Panc1 (cell line): ENCODE measurements at regions of chr10 and their contacts with region 1.

Region 1: DNA sequence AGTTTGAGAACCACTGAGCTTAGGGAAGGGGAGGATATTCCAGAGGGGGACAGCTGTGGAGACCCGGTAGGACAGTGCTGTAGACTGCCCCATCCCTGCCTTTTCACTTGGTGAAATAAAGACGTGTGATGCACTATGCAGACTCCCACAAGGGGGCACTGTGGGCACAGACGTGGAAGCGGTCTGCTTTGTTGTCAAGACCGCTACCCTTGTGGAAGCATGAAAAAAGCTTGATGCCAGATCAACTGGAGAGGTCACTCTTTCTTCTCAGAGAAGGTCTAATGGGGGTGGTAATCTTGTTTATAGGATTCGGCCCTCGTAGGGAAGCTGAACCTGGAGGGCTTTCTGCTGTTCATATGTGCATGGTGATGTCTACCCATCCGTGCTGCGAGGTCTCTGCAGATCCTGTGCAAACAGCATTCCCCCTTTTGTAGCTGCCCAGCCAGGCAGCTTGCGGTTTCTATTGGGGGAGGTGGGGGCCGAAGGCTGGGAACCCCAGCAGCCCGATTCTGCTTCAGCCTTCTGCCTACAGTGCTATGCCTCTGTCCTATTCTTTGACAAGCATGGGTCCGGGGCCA is 13.7 kb downstream of the RPS24 start:
- DNase-seq: peak; percentile 79
- ATAC-seq: peak; percentile 75
- H3K4me3 ChIP-seq: no peak overlapping the region
- H3K27ac ChIP-seq: no peak overlapping the region
- H3K4me1 ChIP-seq: peaks cover 16% of the 10 kb centered on the region
- H3K27me3 ChIP-seq: no peaks in the 10 kb centered on the region
- CTCF ChIP-seq: peak; percentile 97

Region 2: DNA sequence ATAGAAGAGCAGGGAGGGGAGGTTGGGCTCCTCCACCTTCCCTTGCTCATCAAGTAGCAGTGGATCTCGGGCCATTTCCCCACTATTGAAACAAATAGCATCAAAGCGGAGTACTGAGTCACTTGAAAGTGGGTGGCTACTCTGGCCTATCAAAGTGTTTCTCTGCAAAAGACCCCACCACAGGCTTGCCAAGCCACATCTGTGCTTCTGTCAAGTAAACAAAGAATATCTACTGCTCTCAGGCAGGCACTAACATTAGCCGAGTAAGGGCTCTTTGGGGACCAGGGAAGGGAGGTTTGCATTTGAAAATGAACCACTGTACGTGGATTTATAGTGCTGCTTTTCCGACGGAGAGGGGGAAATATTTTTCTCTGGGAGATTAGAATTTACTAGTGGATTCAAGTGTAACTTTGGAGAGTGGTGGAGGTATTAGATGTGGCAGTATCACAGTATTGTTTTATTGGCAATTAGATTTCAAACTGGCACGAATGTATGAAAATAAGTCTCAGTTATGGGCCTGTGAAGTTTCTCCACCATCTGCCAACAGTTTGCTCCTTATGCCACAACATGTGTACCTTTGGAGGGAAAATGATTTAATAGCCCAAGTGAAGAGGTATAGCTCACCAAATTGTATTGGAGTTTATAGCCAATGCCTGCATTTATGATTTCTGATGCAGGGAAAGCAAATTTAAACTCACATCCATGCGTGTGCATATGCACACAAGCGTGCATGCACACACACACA is 83.7 kb after region 1 on chr10:
- CTCF ChIA-PET with region 1: interaction called, 4 read pairs
- POLR2A ChIA-PET with region 1: interaction called, 11 read pairs
- in situ Hi-C with region 1: no loop called
- intact Hi-C with region 1: no loop called
- DNase-seq: no peak
- ATAC-seq: no peak
- H3K4me3 ChIP-seq: no peak overlapping the region
- H3K27ac ChIP-seq: no peak overlapping the region
- H3K4me1 ChIP-seq: no peaks in the 10 kb centered on the region
- H3K27me3 ChIP-seq: peaks cover 15% of the 10 kb centered on the region
- CTCF ChIP-seq: no peak

Region 3: DNA sequence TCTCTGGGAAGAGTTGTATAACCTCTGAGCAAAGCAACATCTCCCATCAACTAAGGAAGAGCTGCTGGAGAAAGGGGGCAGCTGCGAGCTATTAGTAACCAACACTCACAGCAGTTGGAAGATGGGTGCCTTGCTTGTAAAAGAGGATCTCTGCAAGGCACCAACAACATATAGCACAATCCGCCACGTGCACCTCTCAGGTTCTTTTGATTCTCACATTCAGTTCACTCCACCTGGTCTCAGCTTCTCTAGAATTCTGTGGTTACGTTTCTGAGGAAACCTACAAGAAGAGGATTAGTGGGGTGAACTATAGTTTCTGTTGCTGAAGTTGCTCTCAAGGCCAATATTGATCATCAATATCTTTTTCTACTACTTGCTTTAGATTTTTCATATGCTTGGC is 103.4 kb after region 1 on chr10:
- CTCF ChIA-PET with region 1: no interaction called
- POLR2A ChIA-PET with region 1: no interaction called
- in situ Hi-C with region 1: no loop called
- intact Hi-C with region 1: no loop called
- DNase-seq: no peak
- ATAC-seq: no peak
- H3K4me3 ChIP-seq: no peak overlapping the region
- H3K27ac ChIP-seq: no peak overlapping the region
- H3K4me1 ChIP-seq: no peaks in the 10 kb centered on the region
- H3K27me3 ChIP-seq: peaks cover 12% of the 10 kb centered on the region; the same call in 1 of the 2 replicates
- CTCF ChIP-seq: no peak

Region 4: DNA sequence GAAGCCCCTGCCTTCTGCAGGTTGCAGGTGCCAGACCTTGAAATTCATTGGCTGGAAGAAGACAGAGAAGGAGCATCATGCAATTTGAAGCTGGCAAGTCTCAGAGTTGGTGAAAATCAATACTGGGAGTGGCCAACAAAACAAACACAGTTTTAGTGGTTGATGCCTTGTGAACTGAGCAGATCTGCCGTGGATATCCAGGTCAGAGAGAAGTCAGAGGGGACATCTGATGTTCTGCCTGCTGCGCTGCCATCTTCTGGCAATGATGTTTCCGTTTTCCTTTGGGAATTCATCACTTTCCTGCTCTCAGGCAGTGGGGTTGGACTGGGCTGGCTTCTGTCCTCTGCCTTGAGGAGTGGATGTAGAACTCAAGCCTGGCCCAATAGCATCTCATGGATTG is 118.2 kb after region 1 on chr10:
- CTCF ChIA-PET with region 1: interaction called, 3 read pairs
- POLR2A ChIA-PET with region 1: no interaction called
- in situ Hi-C with region 1: no loop called
- intact Hi-C with region 1: loop called (anchors 2 kb)
- DNase-seq: no peak
- ATAC-seq: no peak
- H3K4me3 ChIP-seq: no peak overlapping the region
- H3K27ac ChIP-seq: no peak overlapping the region
- H3K4me1 ChIP-seq: no peaks in the 10 kb centered on the region
- H3K27me3 ChIP-seq: peaks cover 29% of the 10 kb centered on the region
- CTCF ChIP-seq: peak; percentile 57

Region 5: GRCh38 chr10:78304091-78305045 is 257.0 kb after region 1 on chr10:
- CTCF ChIA-PET with region 1: interaction called, 3 read pairs
- POLR2A ChIA-PET with region 1: no interaction called
- in situ Hi-C with region 1: no loop called
- intact Hi-C with region 1: loop called (anchors 5 kb)
- DNase-seq: no peak
- ATAC-seq: no peak
- H3K4me3 ChIP-seq: no peak overlapping the region
- H3K27ac ChIP-seq: peak overlapping the region; percentile 13; the same call in 1 of the 2 replicates
- H3K4me1 ChIP-seq: peaks cover 13% of the 10 kb centered on the region
- H3K27me3 ChIP-seq: peaks cover 24% of the 10 kb centered on the region; the same call in 1 of the 2 replicates
- CTCF ChIP-seq: no peak

Region 6: DNA sequence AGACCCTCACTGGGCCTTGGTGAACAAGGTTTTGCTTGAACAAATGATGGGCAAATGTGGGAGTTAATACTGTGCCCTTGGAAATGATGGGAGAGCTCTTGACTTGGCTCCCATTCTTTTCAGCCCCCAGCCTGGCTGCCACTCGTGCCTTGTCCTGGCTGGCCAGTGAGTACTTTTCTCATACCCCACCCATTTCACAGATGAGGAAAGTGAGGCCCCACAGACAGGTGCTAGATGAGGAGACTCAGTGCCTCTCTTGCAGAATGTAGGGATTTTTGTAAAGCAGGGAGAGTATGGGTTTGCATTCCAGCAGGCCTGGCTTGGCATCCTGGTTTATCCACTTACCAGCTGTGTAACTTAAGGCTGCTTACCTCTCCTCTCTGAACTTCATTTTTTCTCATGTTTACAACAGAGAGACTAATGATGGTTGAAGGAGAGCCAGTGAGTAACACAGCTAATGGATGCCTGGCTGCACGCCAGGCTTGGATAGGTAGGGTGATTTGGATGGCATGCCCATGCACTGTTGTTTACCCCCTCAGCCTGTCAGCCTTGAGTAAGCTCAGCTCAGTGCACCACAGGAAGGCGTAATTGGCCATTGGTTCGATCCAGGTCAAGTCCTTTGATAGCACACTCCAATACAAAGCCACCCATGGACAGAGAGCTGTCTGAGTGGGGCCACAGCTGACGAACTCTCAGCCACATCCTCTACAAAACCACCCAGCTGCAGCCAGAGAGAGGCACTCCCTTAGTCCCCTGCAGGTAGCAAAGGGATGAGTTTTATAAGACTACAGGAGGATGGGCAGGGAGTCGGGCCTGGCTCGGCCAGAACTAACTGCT is 423.1 kb after region 1 on chr10:
- CTCF ChIA-PET with region 1: no interaction called
- POLR2A ChIA-PET with region 1: no interaction called
- in situ Hi-C with region 1: no loop called
- intact Hi-C with region 1: no loop called
- DNase-seq: no peak
- ATAC-seq: peak; percentile 23; the same call in 1 of the 2 replicates
- H3K4me3 ChIP-seq: no peak overlapping the region
- H3K27ac ChIP-seq: no peak overlapping the region; the same call in 1 of the 2 replicates
- H3K4me1 ChIP-seq: no peaks in the 10 kb centered on the region
- H3K27me3 ChIP-seq: no peaks in the 10 kb centered on the region
- CTCF ChIP-seq: no peak

Region 7: DNA sequence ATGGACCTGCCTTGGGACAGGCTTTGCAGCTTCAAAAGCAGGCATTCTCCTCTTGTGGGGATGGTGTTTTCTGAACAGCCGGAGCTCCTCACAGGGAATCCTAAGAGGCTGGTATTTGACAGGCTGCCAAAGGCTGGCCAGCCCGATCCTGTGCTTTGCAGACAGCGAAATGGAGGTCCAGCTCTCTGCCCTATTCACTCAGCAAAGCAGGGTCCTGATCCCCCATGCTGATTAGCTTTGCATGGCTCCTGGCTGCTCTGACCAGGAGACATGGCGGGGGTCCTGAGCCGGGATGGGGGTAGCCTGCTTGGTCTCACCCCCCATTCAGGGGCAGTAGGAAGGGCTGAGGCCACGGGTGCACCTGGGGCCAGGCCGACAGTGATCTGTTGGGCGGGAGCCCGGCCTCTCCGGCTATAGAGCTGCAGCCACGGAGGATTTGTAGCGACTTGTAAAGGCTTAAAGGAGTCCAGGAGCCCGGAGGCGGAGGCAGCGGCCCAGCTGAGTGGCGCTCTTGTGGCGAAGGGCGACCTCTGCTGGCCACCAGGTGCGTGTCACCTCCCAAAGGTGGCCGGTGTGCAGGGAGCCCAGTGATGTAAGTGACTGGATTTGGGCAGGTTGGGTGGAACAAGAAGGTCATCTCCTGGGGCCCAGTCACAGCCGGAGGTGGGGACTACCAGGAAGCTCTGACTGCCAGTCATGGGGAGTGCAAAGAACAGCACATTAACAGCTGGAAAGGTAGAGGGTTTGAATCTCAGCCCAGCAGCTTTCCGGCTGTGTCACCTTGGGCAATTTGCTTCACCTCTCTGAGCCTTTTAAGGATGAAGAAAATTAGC is 1147.9 kb after region 1 on chr10:
- CTCF ChIA-PET with region 1: interaction called, 3 read pairs
- POLR2A ChIA-PET with region 1: no interaction called
- in situ Hi-C with region 1: no loop called
- intact Hi-C with region 1: loop called (anchors 5 kb)
- DNase-seq: peak; percentile 30
- ATAC-seq: peak; percentile 86
- H3K4me3 ChIP-seq: no peak overlapping the region
- H3K27ac ChIP-seq: no peak overlapping the region
- H3K4me1 ChIP-seq: peaks cover 24% of the 10 kb centered on the region
- H3K27me3 ChIP-seq: no peaks in the 10 kb centered on the region
- CTCF ChIP-seq: peak; percentile 98